Activated CD4-positive, alpha-beta T cell treated with anti-CD3 and anti-CD28 coated beads, Interleukin-2, amount 10 ng/mL, durations not matched to agents 24 days and 14 days (primary cell): ENCODE measurements at regions of chr3 and their contacts with region 1.

Region 1: DNA sequence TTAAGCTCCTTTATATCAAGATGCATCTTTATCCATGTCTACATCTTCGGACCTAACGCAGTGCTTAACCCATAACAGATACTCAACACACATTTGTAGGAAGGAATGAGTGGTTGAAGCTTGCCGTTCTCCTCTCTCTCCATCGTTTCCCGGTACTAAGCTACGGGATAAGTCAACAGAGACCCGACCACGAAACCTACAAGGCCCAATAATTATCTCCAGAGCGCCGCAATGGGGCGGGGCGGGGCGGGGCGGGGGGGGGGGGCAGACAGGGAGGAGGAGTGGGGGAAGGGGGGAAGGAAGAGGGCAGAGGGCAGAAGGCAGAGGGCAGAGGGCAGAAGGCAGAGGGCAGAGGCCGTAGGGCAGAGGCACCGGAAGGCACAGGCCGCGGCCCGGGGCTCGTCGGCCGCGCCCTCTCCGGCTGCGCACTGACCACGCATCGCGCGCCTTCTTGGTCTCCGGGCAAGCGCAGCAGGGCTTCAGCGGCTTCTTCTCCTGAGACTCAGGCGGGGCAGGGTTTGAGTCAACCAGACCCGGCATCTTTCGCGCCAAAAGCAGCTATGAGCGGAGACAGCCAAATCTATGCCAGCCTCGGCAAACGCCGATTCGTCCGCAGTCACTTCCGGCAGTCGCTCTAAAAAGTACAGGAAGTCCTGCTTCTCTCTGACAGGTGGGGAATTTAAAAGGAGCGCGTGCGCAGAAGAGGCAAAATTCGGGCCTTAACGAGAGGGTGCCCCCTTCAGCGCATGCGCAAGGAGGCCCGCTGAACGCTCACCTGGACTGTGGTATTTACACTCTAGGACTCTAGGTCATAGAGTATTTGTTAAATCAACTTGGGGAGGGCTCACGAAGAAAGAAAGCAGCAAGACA is at the start of gene COX17:
- DNase-seq: peak; percentile 98
- H3K4me3 Mint-ChIP-seq: peak within 1 kb of the TSS; percentile 87
- H3K27ac Mint-ChIP-seq: peak within 1 kb of the TSS; percentile 96
- H3K4me1 Mint-ChIP-seq: peaks cover 33% of the 10 kb centered on the region
- H3K27me3 Mint-ChIP-seq: no peaks in the 10 kb centered on the region
- total RNA-seq, gene COX17: 61.0 and 70.0 TPM in 2 replicates

Region 2: DNA sequence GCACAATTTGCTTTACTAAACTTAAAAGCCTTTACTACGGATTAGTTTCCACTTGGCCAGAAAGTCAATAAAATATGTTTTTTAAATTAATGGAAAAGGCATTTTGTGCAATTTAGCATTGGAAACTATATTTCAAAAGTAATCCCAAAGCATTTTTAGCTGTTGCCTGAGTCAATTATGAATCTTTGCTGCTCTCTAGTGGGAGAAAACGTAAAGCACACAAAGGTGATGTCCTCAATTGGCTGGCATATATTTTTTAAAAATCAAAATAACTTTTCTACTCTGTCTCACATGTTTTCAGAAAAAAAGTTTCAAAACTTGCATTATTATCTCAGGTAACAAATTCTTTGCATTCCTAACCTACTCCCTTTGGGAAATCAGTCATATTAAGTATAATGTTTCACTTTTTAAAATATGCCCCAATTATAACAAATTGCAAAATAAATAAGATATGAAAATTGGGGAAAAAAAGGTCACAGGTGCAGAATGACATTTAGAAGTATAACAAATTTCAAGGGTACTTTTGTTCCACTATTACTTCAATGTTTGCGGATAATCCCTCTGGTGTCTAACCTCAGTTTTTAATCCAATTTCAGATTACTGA is 578.3 kb before region 1 on chr3:
- intact Hi-C with region 1: loop called (anchors 2 kb)
- DNase-seq: peak; percentile 77
- H3K4me3 Mint-ChIP-seq: no peak overlapping the region
- H3K27ac Mint-ChIP-seq: no peak overlapping the region
- H3K4me1 Mint-ChIP-seq: no peaks in the 10 kb centered on the region
- H3K27me3 Mint-ChIP-seq: no peaks in the 10 kb centered on the region

Region 3: GRCh38 chr3:119279101-119279554 is 397.9 kb before region 1 on chr3:
- intact Hi-C with region 1: loop called (anchors 1 kb)
- DNase-seq: no peak
- H3K4me3 Mint-ChIP-seq: no peak overlapping the region
- H3K27ac Mint-ChIP-seq: no peak overlapping the region
- H3K4me1 Mint-ChIP-seq: peaks cover 7% of the 10 kb centered on the region
- H3K27me3 Mint-ChIP-seq: peaks cover 5% of the 10 kb centered on the region

Region 4: GRCh38 chr3:119498186-119498987 is 178.6 kb before region 1 on chr3 and contains the start of gene TIMMDC1:
- intact Hi-C with region 1: loop called (anchors 1 kb)
- DNase-seq: peak; percentile 99
- H3K4me3 Mint-ChIP-seq: peak within 1 kb of the TSS; percentile 99
- H3K27ac Mint-ChIP-seq: peak within 1 kb of the TSS; percentile 99
- H3K4me1 Mint-ChIP-seq: peaks cover 23% of the 10 kb centered on the region
- H3K27me3 Mint-ChIP-seq: no peaks in the 10 kb centered on the region
- total RNA-seq, gene TIMMDC1: 113 and 117 TPM in 2 replicates

Region 5: GRCh38 chr3:119550192-119550910 is 126.7 kb before region 1 on chr3:
- intact Hi-C with region 1: no loop called
- DNase-seq: no peak
- H3K4me3 Mint-ChIP-seq: no peak overlapping the region
- H3K27ac Mint-ChIP-seq: no peak overlapping the region
- H3K4me1 Mint-ChIP-seq: peaks cover 10% of the 10 kb centered on the region
- H3K27me3 Mint-ChIP-seq: no peaks in the 10 kb centered on the region

Region 6: GRCh38 chr3:119600732-119601131 is 76.3 kb before region 1 on chr3:
- intact Hi-C with region 1: loop called (anchors 2 kb)
- DNase-seq: peak; percentile 69
- H3K4me3 Mint-ChIP-seq: no peak overlapping the region
- H3K27ac Mint-ChIP-seq: peak overlapping the region; percentile 77
- H3K4me1 Mint-ChIP-seq: peaks cover 31% of the 10 kb centered on the region
- H3K27me3 Mint-ChIP-seq: no peaks in the 10 kb centered on the region

Region 7: GRCh38 chr3:119856695-119857094 is 179.7 kb after region 1 on chr3:
- intact Hi-C with region 1: no loop called
- DNase-seq: no peak
- H3K4me3 Mint-ChIP-seq: no peak overlapping the region
- H3K27ac Mint-ChIP-seq: no peak overlapping the region
- H3K4me1 Mint-ChIP-seq: peaks cover 8% of the 10 kb centered on the region
- H3K27me3 Mint-ChIP-seq: no peaks in the 10 kb centered on the region

Region 8: GRCh38 chr3:121167374-121168128 is 1490.5 kb after region 1 on chr3:
- intact Hi-C with region 1: no loop called
- DNase-seq: no peak
- H3K4me3 Mint-ChIP-seq: no peak overlapping the region
- H3K27ac Mint-ChIP-seq: no peak overlapping the region
- H3K4me1 Mint-ChIP-seq: no peaks in the 10 kb centered on the region
- H3K27me3 Mint-ChIP-seq: no peaks in the 10 kb centered on the region